Activated CD8-positive, alpha-beta T cell treated with anti-CD3 and anti-CD28 coated beads, Interleukin-2, amount 10 ng/mL, durations not matched to agents 7 days and 5 days (primary cell): ENCODE measurements at regions of chr2 and their contacts with region 1.

Region 1: DNA sequence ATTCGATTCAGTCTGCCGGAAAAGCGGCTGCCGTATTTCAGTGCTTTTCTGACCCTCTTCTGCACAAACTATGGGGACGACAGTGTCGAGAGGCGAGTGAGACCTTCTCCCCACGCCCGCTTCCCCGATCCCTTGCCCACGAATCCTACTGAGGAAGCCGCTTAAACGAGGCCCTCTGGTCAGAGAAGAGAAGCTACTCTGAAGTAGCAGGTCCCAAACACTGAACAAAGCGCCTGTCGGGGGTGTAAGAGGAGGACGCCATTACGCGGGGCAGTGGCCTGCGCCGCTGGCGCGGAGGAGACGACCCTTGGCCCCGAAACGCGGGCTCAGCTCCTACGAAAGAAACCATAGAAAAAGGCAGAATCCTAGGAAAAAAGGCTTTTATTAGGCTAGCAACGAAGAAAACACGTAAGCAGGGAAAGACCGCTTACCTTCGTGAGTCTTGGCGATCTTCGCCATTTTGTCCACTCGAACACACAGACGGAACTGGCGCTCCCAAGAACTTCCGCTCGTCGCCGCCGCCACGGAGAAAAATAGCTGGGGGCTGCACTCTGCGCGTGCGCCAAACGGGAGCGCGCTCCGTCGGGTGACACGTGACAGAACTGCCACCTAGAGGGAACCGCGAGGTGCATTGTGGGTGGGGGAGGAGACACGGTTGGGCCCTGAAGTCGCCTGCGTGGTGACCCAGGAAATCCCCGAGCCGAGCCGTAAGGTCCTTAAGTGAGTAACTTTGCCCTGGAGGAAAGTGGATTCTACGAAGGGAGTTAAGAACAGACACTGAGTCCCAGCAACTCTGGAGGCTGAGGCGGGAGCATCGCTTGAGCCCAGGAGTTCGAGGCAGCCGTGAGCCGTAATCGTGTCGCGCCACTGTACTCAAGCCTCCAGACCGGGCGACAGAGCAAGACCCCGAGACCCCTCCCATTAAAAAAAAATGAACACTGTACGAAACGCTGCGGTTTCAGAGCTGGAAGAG is at the start of gene SF3B1:
- DNase-seq: peak; percentile 99
- ATAC-seq: peak; percentile 93
- H3K4me3 Mint-ChIP-seq: peak within 1 kb of the TSS; percentile 87
- H3K27ac Mint-ChIP-seq: peak within 1 kb of the TSS; percentile 100
- H3K4me1 Mint-ChIP-seq: peaks cover 49% of the 10 kb centered on the region
- H3K27me3 Mint-ChIP-seq: no peaks in the 10 kb centered on the region
- total RNA-seq, gene SF3B1: 266 to 267 TPM

Region 2: GRCh38 chr2:197219636-197220035 is 215.2 kb before region 1 on chr2:
- CTCF ChIA-PET with region 1: no interaction called
- POLR2A ChIA-PET with region 1: no interaction called
- DNase-seq: no peak
- ATAC-seq: no peak
- H3K4me3 Mint-ChIP-seq: no peak overlapping the region
- H3K27ac Mint-ChIP-seq: no peak overlapping the region
- H3K4me1 Mint-ChIP-seq: peaks cover 78% of the 10 kb centered on the region
- H3K27me3 Mint-ChIP-seq: no peaks in the 10 kb centered on the region

Region 3: DNA sequence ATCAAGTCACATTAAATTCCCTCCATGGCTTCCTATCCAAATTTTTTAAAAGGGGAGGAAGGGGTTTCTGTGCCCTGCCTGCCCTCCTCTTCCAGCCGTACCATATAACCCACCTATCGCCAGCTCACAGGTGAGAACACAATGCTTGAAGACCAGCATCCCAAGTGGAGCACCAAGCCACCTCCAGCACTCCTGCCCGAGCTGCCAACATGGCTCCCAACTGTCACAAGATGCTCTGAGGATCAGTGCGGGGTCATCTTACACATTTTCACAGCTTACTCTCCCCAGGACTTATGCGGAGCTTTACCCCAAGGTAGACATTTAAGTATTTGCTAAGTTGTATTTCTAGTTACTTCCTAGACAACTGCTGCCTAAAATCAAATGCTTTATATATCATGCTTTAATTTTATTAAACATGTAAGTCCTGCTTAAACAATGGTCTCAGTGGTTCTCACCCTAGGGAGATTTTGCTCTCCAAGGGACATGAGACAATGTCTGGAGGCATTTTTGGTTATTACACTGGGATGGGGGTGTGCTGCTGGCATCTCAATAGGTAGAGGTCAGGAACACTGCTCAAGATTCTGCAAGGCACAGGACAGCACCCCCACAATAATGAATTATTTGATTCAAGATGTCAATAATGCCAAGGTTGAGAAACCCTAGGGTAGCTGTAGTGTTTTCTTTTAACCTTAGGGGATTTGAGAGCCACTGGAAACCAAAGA is 45.8 kb before region 1 on chr2:
- CTCF ChIA-PET with region 1: no interaction called
- POLR2A ChIA-PET with region 1: no interaction called
- DNase-seq: no peak
- ATAC-seq: no peak
- H3K4me3 Mint-ChIP-seq: no peak overlapping the region
- H3K27ac Mint-ChIP-seq: no peak overlapping the region
- H3K4me1 Mint-ChIP-seq: no peaks in the 10 kb centered on the region
- H3K27me3 Mint-ChIP-seq: peaks cover 8% of the 10 kb centered on the region

Region 4: DNA sequence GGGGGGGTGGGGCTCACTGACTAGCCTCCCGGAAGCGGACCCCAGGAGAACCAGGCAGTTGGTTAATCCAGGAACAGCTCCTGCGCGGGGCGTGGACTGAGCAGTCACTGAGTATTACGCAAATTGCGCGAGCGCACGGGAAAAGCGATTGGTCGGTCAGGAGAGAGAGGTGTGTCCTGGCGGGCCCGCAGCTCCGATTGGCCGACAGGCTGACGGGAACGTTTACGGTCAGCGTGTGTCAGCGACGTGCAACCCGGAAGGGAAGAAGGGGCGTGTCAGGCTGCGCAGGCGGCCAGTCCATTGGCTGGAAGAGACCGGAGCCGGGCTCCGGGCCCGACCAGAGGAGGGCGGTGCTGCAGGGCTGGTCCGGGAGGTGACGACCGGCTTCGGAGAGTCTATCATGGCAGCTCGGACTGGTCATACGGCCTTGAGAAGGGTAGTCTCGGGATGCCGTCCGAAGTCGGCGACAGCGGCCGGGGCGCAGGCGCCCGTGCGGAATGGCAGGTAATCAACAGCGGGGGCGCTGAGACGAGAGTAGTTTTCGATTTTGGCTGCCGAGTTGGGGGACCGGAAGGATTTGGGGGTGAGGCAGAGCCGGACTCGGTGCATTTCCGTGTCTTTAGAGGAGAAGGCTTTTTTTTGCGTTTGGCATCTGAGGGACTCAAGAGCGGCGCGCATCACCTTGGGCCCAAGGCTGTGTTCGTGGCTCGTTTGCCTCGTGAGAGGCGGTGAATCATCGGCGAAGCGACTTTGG is 18.5 kb after region 1 on chr2 and contains the start of gene COQ10B:
- CTCF ChIA-PET with region 1: interaction called, 9 read pairs
- POLR2A ChIA-PET with region 1: interaction called, 143 read pairs
- DNase-seq: peak; percentile 99
- ATAC-seq: peak; percentile 95
- H3K4me3 Mint-ChIP-seq: peak within 1 kb of the TSS; percentile 96
- H3K27ac Mint-ChIP-seq: peak within 1 kb of the TSS; percentile 100
- H3K4me1 Mint-ChIP-seq: peaks cover 38% of the 10 kb centered on the region
- H3K27me3 Mint-ChIP-seq: no peaks in the 10 kb centered on the region
- total RNA-seq, gene COQ10B: 22.5 to 22.6 TPM

Region 5: GRCh38 chr2:197499594-197500526 is 65.0 kb after region 1 on chr2 and contains the starts of genes HSPD1 and HSPE1:
- CTCF ChIA-PET with region 1: no interaction called
- POLR2A ChIA-PET with region 1: interaction called, 37 read pairs
- DNase-seq: peak; percentile 99
- ATAC-seq: peak; percentile 86
- H3K4me3 Mint-ChIP-seq: peak within 1 kb of the TSS; percentile 98
- H3K27ac Mint-ChIP-seq: peak within 1 kb of the TSS; percentile 98
- H3K4me1 Mint-ChIP-seq: peaks cover 52% of the 10 kb centered on the region
- H3K27me3 Mint-ChIP-seq: no peaks in the 10 kb centered on the region
- total RNA-seq, gene HSPD1: 322 to 336 TPM
- total RNA-seq, gene HSPE1: 153 to 162 TPM

Region 6: GRCh38 chr2:197515739-197516392 is 81.0 kb after region 1 on chr2 and contains the start of gene MOB4:
- CTCF ChIA-PET with region 1: no interaction called
- POLR2A ChIA-PET with region 1: interaction called, 17 read pairs
- DNase-seq: peak; percentile 95
- ATAC-seq: peak; percentile 92
- H3K4me3 Mint-ChIP-seq: peak within 1 kb of the TSS; percentile 91
- H3K27ac Mint-ChIP-seq: peak within 1 kb of the TSS; percentile 91
- H3K4me1 Mint-ChIP-seq: peaks cover 34% of the 10 kb centered on the region
- H3K27me3 Mint-ChIP-seq: no peaks in the 10 kb centered on the region
- total RNA-seq, gene MOB4: 16.5 to 21.3 TPM

Region 7: DNA sequence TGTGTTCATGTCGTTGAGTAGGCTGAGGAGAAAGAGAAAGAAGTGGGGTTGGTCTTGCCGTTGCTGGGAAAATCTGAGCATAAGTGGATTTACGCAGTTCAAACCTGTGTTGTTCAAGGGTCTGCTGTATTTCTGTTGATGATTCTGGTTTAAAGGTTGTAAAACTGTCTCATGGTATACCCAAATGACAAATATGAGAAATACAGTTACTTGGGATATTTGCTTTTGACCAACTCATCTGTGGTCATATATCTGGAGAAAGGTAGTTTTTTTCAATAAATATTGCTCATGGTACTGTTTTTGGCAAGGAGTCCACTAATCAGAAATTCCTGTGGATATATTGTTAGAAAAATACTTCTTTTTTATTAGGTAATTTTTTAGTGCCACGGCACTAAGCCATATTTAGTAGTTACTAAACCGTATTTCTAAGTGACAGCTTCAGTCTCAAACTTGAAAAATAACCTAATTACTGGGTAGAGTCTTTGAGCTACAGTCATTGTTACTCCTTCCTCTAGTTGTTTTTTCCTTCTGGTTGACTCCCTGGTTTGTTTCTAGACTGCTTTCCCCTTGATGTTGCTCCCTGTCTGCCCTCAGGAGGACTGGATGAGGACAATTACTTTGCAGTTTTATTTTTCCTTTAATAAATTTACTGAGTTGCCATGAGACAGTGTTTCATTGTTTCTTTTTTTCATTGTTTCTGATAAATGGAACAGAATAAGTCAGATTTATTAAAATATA is 112.5 kb after region 1 on chr2:
- CTCF ChIA-PET with region 1: no interaction called
- POLR2A ChIA-PET with region 1: no interaction called
- DNase-seq: no peak
- ATAC-seq: no peak
- H3K4me3 Mint-ChIP-seq: no peak overlapping the region
- H3K27ac Mint-ChIP-seq: no peak overlapping the region
- H3K4me1 Mint-ChIP-seq: no peaks in the 10 kb centered on the region
- H3K27me3 Mint-ChIP-seq: no peaks in the 10 kb centered on the region

Region 8: DNA sequence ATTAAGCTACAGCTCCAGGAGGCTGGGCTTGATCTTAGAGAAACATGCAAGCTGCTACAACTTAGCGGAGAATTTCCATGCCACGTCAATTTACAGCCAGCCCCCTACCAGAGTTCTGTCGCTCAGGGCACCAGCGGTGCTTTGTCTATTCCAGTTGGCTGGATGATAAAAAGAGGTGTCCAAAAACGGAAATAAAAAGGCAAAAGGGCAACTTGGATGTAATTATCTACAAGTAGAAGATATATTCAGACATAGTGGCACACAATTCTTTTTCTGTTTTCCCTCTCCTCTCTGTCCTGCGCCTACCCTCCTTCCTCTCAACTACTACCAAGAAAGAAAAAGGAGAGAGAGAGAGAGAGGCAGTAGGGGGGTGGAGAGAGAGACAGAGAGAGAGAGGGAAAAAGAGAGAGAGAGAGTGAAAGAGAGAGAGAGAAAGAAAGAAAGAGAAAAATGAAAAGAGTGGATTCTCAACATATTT is 240.9 kb after region 1 on chr2:
- CTCF ChIA-PET with region 1: no interaction called
- POLR2A ChIA-PET with region 1: no interaction called
- DNase-seq: no peak
- ATAC-seq: no peak
- H3K4me3 Mint-ChIP-seq: no peak overlapping the region
- H3K27ac Mint-ChIP-seq: no peak overlapping the region
- H3K4me1 Mint-ChIP-seq: no peaks in the 10 kb centered on the region
- H3K27me3 Mint-ChIP-seq: peaks cover 19% of the 10 kb centered on the region

Region 9: DNA sequence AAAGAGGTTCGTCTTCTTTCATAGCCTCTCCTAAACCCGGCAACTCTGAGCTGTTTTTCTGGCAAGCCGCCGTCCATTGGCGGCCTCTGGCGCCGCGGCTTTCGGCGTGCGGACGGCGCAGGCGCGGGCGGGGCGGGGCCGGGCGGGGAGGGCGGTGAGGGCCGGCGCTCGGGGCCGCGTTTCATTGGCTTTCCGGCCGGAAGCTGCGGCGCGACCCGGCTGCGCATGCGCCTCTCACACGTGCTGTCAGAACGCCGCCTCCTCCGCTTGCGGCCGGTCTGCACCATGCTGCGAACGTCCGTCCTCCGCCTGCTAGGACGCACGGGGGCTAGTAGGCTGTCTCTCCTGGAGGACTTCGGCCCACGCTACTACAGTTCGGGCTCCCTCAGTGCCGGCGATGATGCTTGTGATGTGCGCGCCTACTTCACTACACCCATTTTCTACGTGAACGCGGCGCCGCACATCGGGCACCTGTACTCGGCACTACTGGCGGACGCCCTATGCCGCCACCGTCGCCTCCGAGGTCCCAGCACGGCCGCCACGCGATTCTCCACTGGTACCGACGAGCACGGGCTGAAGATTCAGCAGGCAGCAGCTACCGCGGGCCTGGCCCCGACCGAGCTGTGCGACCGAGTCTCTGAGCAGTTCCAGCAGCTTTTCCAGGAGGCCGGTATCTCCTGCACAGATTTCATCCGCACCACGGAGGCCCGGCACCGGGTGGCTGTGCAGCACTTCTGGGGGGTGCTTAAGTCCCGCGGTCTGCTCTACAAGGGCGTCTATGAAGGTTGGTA is 270.5 kb after region 1 on chr2 and contains the start of gene MARS2:
- CTCF ChIA-PET with region 1: no interaction called
- POLR2A ChIA-PET with region 1: interaction called, 10 read pairs
- DNase-seq: peak; percentile 94
- ATAC-seq: peak; percentile 91
- H3K4me3 Mint-ChIP-seq: peak within 1 kb of the TSS; percentile 89
- H3K27ac Mint-ChIP-seq: peak within 1 kb of the TSS; percentile 88
- H3K4me1 Mint-ChIP-seq: peaks cover 42% of the 10 kb centered on the region
- H3K27me3 Mint-ChIP-seq: no peaks in the 10 kb centered on the region
- total RNA-seq, gene MARS2: 15.0 to 15.6 TPM